ENCODE measurements at regions of chr10 and their contacts with region 1.

Region 1: DNA sequence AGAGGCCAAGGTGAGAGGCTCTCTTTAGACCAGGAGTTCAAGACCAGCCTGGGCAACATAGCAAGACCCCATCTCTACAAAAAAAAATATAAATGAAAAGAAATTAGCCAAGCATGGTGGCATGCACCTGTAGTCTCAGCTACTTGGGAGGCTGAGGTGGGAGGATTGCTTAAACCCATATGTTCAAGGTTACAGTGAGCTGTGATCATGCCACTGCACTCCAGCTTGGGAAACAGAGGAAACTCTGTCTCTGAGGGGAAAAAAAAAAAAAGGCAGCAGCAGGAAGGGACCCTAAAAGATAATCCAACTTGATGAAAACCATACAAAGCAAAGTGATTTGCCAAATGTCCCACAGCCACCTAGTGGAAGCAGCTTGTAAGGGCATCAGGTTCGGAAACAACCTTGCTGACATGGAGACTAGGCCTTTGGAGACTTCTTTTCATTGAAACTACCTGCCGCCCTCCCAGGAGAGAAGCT is 15.6 kb upstream of the PBLD start:
- DNase-seq: peak; percentile 44 to 75
- ATAC-seq: peak; percentile 79 to 86
- H3K4me3 ChIP-seq: no peak overlapping the region
- H3K27ac ChIP-seq: no peak overlapping the region
- H3K4me1 ChIP-seq: 0 out of 3 replicates have a peak, but pooled peaks cover under 1% of the 10 kb centered on the region
- CTCF ChIP-seq: peak; percentile 56
- EP300 ChIP-seq: no peak
- POLR2A ChIP-seq: no peak
- RAD21 ChIP-seq: peak; percentile 42 to 57; a peak in 3 of 5 replicates

Region 2: GRCh38 chr10:68331455-68332258 is 16.6 kb before region 1 on chr10 and contains the start of gene HNRNPH3:
- CTCF ChIA-PET with region 1: interaction called, 11 read pairs
- POLR2A ChIA-PET with region 1: interaction called, 11 read pairs
- DNase-seq: peak; percentile 90 to 99
- ATAC-seq: peak; percentile 81 to 88
- H3K4me3 ChIP-seq: peak within 1 kb of the TSS; percentile 97
- H3K27ac ChIP-seq: peak within 1 kb of the TSS; percentile 99
- H3K4me1 ChIP-seq: peaks cover 48% of the 10 kb centered on the region
- CTCF ChIP-seq: no peak
- EP300 ChIP-seq: no peak
- POLR2A ChIP-seq: peak; percentile 97
- RAD21 ChIP-seq: no peak; a peak in 1 of 5 replicates
- polyA plus RNA-seq, gene HNRNPH3: 108 and 210 TPM in 2 replicates

Region 3: DNA sequence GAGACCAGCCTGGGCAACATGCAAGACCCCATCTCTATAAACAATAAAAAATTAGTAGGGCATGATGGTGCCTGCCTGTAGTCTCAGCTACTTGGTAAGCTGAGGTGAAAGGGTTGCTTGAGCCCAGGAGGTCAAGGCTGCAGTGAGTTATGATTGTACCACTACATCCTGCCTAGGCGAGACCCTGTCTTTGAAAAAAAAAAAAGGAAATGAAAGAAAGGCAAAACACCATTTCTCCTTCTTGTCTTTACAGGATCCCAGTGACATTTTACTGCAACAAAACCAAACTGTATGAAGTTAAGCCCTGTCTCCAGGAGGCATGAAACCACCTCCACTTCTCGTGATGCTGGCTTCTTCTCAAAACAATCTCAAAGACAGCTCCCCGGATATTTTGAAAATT is 14.3 kb after region 1 on chr10:
- CTCF ChIA-PET with region 1: interaction called, 12 read pairs
- POLR2A ChIA-PET with region 1: no interaction called
- DNase-seq: no peak
- ATAC-seq: no peak
- H3K4me3 ChIP-seq: no peak overlapping the region
- H3K27ac ChIP-seq: no peak overlapping the region
- H3K4me1 ChIP-seq: no peaks in the 10 kb centered on the region
- CTCF ChIP-seq: no peak
- EP300 ChIP-seq: no peak
- POLR2A ChIP-seq: no peak
- RAD21 ChIP-seq: no peak

Region 4: GRCh38 chr10:68501691-68502090 is 153.4 kb after region 1 on chr10:
- CTCF ChIA-PET with region 1: no interaction called
- POLR2A ChIA-PET with region 1: no interaction called
- DNase-seq: no peak
- ATAC-seq: no peak
- H3K4me3 ChIP-seq: no peak overlapping the region
- H3K27ac ChIP-seq: no peak overlapping the region
- H3K4me1 ChIP-seq: no peaks in the 10 kb centered on the region
- CTCF ChIP-seq: no peak
- EP300 ChIP-seq: no peak
- POLR2A ChIP-seq: no peak
- RAD21 ChIP-seq: no peak

Region 5: GRCh38 chr10:68600041-68600778 is 251.9 kb after region 1 on chr10:
- CTCF ChIA-PET with region 1: no interaction called
- POLR2A ChIA-PET with region 1: no interaction called
- DNase-seq: peak; percentile 68 to 74
- ATAC-seq: peak; percentile 94 to 97
- H3K4me3 ChIP-seq: peak overlapping the region; percentile 46
- H3K27ac ChIP-seq: peak overlapping the region; percentile 89
- H3K4me1 ChIP-seq: peaks cover 28% of the 10 kb centered on the region
- CTCF ChIP-seq: no peak
- EP300 ChIP-seq: no peak
- POLR2A ChIP-seq: peak; percentile 52
- RAD21 ChIP-seq: 0 out of 5 replicates have a peak, but pooled peaks of 1 of the 2 experiments have one; percentile 2

Measured in A549 (cell line).